Endothelial cell of umbilical vein (primary cell): ENCODE measurements at regions of chr20 and their contacts with region 1.

Region 1: DNA sequence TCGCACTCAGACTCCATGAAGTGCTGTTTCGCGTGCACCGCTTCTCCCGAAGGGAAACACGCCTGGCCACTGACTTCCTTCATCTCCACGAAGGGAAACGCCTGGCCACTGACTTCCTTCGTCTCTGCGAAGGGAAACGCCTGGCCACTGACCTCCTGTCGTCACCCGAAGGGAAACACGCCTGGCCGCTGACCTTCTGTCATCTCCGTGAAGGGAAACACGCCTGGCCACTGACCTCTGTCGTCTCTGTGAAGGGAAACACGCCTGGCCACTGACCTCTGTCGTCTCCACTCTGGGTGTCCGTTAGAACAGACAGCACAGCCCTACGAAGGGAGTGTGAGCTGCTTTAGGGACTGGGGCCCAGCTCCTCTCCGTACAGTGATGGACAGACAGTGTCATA is 17.1 kb upstream of the ADRM1 start:
- DNase-seq: peak; percentile 98
- H3K4me3 ChIP-seq: no peak overlapping the region
- H3K27ac ChIP-seq: peak overlapping the region; percentile 91
- H3K4me1 ChIP-seq: peaks cover 19% of the 10 kb centered on the region
- H3K27me3 ChIP-seq: no peaks in the 10 kb centered on the region
- CTCF ChIP-seq: no peak
- POLR2A ChIP-seq: peak; percentile 89

Region 2: DNA sequence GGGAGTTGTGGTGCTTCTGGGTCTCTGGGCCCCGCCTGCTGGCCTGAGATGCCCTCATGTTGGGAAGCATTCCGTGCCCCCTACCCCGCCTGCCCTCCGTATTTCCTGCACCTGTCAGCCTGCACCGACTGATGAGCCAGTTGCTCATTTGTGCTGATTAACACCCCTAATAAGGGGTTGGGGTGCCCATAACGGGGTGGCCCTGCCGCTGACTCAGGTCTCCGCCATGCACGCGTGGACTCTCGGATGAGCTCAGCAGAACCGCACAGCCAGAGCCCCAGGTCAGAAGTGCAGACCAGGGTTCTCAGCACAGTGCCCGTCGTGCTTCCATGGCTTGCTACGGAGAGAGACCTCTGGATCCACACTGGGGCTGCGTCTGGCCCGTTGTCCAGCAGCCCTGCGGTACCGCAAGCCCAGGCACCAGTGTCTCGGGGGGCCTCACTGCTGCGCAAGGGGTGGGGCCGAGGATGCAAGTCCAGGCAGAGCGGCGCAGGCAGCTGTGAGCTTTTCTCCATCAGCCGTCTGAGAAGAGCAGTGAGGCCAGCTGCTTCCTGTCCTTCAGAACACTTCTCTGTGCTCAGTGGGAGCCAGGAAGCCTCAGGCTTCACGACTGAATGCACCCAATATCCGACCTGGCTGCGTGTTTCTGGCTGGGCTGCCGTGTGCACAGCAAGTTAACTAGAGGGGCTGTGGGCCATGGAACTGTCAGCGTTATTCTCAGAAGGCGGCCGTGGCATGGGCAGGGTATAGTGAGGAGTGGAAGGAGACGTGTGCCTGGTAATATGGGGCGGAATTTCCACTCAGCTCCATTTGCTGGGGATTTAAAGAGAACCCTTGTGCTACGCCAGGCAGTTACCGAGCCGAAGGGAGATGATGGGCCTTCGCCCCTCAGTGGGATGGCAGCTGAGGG is 84.3 kb before region 1 on chr20:
- CTCF ChIA-PET with region 1: no interaction called
- POLR2A ChIA-PET with region 1: no interaction called
- dilution Hi-C with region 1: no loop called
- intact Hi-C with region 1: loop called (anchors 5 kb)
- DNase-seq: no peak
- H3K4me3 ChIP-seq: no peak overlapping the region
- H3K27ac ChIP-seq: no peak overlapping the region
- H3K4me1 ChIP-seq: peaks cover 9% of the 10 kb centered on the region
- H3K27me3 ChIP-seq: no peaks in the 10 kb centered on the region
- CTCF ChIP-seq: no peak
- POLR2A ChIP-seq: no peak